ENCODE measurements at regions of chr9 and their contacts with region 1.

Region 1: GRCh38 chr9:129889941-129890717 is 54.9 kb downstream of the USP20 start:
- DNase-seq: peak in 2 of 3 donors; percentile 76 to 79
- ATAC-seq: no peak
- H3K4me3 ChIP-seq: no peak overlapping the region
- H3K27ac ChIP-seq: no peak overlapping the region
- H3K4me1 ChIP-seq: no peaks in the 10 kb centered on the region
- H3K27me3 ChIP-seq: no peaks in the 10 kb centered on the region

Region 2: GRCh38 chr9:130042833-130043653 is 152.9 kb after region 1 on chr9 and contains the start of gene FNBP1:
- intact Hi-C with region 1: loop called (anchors 5 to 10 kb)
- DNase-seq: peak; percentile 84 to 94 (median 94)
- ATAC-seq: peak; percentile 94 to 95
- H3K4me3 ChIP-seq: peak within 1 kb of the TSS; percentile 90
- H3K27ac ChIP-seq: peak within 1 kb of the TSS; percentile 86
- H3K4me1 ChIP-seq: no peaks in the 10 kb centered on the region
- H3K27me3 ChIP-seq: no peaks in the 10 kb centered on the region
- total RNA-seq, gene FNBP1: 26.2 to 27.5 (median 26.6) TPM